MCF 10A (cell line): ENCODE measurements at regions of chr1 and their contacts with region 1.

Region 1: DNA sequence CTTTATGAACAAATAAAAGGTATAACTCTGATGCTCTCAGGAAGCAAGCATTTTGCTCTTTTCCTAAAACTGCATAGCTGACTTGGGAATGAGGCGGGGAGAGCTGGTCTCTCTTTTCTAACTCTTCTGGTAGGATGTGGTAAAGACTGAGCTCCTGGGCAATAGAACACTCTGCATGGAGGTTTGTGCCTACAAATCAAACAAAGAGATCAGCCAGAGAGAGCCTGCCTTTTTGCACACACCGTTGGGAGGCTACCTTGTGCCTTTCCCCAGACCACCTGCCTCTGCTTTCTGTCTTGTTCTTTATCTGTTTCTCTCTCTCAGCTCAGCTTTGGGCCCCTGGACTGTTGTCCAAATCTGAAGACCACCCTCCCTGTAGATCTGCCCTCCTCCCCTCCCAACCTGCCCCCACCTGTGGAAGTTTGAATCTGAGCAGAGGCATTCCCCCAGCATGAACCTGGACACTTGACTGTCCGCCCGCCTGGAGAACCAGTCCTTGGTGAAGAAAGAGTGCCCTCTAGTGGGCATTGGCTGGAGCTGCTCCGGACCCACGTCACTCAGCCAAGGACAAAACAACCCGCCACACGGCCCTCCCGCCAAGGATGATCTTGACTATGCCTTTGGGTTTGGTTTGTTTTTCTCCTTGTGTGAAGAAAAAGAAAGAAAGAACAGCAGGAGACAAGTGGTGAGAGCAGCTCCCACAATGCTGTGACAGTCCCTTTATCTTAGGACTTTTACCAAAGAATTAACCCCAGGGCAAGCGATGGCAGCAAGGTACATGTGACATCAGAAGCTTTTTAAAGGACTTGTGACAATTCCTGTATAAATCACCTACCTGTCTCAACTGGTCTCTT is 228.2 kb downstream of the PBX1 start:
- DNase-seq: peak; percentile 91
- H3K4me3 Mint-ChIP-seq: no peak overlapping the region
- H3K27ac Mint-ChIP-seq: no peak overlapping the region
- H3K4me1 Mint-ChIP-seq: peaks cover 38% of the 10 kb centered on the region
- H3K27me3 Mint-ChIP-seq: no peaks in the 10 kb centered on the region
- CTCF ChIP-seq: peak; percentile 98

Region 2: DNA sequence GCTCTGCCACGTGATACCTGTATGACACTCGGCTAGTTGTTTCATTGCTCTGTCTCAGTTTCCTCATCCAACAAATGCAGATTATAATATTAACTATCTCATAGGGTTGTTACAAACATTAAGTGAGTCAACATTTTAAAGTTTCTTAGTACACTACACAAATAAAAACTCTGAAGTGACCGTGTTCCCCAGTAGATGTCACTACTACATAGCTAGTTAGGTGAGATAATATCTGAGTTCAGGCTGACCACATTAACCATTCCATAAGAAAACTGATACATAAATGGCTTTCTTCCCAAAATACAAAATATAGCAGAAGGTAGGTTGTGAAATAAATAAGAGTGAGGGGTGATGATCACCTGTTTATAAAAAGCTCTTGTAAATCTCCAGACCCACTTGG is 1251.4 kb before region 1 on chr1:
- CTCF ChIA-PET with region 1: interaction called, 29 read pairs
- POLR2A ChIA-PET with region 1: no interaction called
- intact Hi-C with region 1: no loop called
- DNase-seq: peak; percentile 60
- H3K4me3 Mint-ChIP-seq: no peak overlapping the region
- H3K27ac Mint-ChIP-seq: no peak overlapping the region
- H3K4me1 Mint-ChIP-seq: no peaks in the 10 kb centered on the region
- H3K27me3 Mint-ChIP-seq: peaks cover under 1% of the 10 kb centered on the region
- CTCF ChIP-seq: peak; percentile 47

Region 3: DNA sequence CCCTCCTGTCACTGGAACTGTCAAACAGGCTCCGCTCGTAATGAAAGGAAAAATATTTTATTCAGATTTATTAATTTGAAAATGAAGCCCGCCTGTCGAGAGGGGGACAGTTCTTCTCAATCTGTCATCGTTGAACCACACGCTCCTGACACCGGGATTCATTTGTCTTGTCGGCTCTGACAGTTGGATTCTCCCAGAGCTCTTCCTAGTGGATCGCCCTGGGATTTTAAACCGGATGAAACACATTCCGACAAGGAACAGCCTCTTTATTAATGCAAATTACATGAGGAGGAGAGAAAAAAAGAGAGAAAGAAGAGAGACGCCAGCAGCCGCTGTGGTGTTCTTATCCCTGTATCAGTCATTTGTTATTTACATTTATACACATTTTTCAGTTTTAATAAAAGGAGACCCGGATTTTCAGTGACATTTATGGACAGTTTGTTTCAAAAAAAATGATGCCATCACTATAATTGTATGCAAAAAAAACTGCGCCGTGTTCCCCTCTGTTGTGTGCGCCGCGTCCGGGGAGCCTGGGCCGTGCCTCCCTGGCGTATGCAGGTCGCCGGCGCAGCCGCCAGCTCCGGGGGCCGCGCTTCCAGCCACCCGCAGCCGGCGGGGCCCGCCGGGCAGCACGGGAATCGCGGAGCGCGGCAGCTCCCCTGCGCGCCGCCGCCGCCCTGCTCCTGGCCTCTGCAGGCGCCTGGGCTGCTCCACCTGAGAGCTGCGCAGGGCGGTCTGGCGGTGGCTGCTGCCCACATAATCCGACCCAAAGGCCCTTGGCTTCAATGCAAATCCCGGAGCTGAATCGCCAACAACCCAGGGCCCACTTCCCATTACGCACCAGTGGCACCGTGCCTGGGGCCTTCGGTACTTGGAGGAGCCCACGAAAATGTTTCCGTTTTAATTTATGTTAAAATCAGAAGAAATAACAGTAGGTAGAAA is 466.1 kb before region 1 on chr1:
- CTCF ChIA-PET with region 1: interaction called, 6 read pairs
- POLR2A ChIA-PET with region 1: no interaction called
- intact Hi-C with region 1: loop called (anchors 5 kb)
- DNase-seq: no peak
- H3K4me3 Mint-ChIP-seq: no peak overlapping the region
- H3K27ac Mint-ChIP-seq: no peak overlapping the region
- H3K4me1 Mint-ChIP-seq: no peaks in the 10 kb centered on the region
- H3K27me3 Mint-ChIP-seq: no peaks in the 10 kb centered on the region
- CTCF ChIP-seq: no peak

Region 4: GRCh38 chr1:164611754-164612642 is 175.2 kb before region 1 on chr1:
- CTCF ChIA-PET with region 1: interaction called, 23 read pairs
- POLR2A ChIA-PET with region 1: interaction called, 14 read pairs
- intact Hi-C with region 1: no loop called
- DNase-seq: peak; percentile 99
- H3K4me3 Mint-ChIP-seq: peak overlapping the region; percentile 62
- H3K27ac Mint-ChIP-seq: peak overlapping the region; percentile 55
- H3K4me1 Mint-ChIP-seq: peaks cover 25% of the 10 kb centered on the region
- H3K27me3 Mint-ChIP-seq: no peaks in the 10 kb centered on the region
- CTCF ChIP-seq: no peak

Region 5: DNA sequence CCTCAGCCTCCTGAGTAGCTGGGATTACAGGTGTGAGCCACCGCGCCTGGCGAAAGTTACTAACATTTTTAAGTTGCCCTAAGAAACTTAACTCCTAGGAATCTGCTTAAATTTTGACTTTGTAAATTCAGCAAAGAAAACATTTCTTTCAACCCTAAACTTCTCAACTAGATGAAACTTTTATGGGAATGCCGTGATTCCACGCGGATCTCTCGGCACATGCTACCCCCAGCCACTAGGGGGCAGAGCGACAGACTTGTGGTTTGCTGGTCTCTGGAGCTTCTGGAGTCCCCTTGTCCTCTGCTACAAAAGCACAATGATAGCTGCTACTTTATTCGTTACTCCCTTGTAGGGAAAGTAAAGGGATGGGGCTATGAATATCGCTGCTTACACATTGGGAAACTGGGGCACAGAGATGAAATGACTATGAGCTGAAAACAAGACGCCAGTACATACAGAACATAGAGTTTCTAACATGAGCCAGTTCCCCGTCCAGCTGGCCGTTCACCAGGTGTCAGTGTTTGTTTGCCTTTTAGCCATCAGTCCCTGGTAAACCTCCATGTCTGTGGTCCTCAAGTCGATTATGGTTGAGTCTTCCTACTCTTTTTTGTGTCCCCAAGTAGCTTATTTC is 113.5 kb before region 1 on chr1:
- CTCF ChIA-PET with region 1: interaction called, 26 read pairs
- POLR2A ChIA-PET with region 1: no interaction called
- intact Hi-C with region 1: loop called (anchors 1 kb)
- DNase-seq: peak; percentile 45
- H3K4me3 Mint-ChIP-seq: no peak overlapping the region
- H3K27ac Mint-ChIP-seq: no peak overlapping the region
- H3K4me1 Mint-ChIP-seq: peaks cover 4% of the 10 kb centered on the region
- H3K27me3 Mint-ChIP-seq: no peaks in the 10 kb centered on the region
- CTCF ChIP-seq: peak; percentile 60

Region 6: DNA sequence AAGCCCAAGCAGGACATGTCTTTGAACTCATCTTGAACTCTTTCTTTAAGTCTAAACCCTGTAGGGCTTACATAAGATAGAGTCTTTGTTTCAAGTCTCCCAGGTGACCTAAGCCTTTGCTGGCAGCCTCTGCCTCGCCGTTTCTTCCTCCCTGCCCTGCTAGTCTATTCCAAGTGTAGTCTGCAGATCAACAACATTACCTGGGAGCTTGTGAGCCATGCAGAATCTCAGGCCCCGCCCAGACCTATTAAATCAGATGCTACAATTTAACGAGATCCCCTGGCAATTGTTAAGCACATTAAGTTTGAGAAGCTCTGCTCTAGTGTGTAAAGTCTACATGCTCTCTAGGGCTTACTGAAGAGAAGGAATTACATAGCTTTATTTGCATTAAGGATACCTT is 43.4 kb after region 1 on chr1:
- CTCF ChIA-PET with region 1: interaction called, 10 read pairs
- POLR2A ChIA-PET with region 1: no interaction called
- intact Hi-C with region 1: no loop called
- DNase-seq: no peak
- H3K4me3 Mint-ChIP-seq: no peak overlapping the region
- H3K27ac Mint-ChIP-seq: no peak overlapping the region
- H3K4me1 Mint-ChIP-seq: no peaks in the 10 kb centered on the region
- H3K27me3 Mint-ChIP-seq: no peaks in the 10 kb centered on the region
- CTCF ChIP-seq: no peak